CD8-positive, alpha-beta T cell (primary cell): ENCODE measurements at regions of chr16 and their contacts with region 1.

Region 1: GRCh38 chr16:46908540-46909372 is 24.6 kb downstream of the GPT2 start:
- DNase-seq: peak; percentile 29 to 74 (median 64)
- ATAC-seq: peak; percentile 26
- H3K4me3 ChIP-seq: no peak overlapping the region
- H3K4me3 Mint-ChIP-seq: no peak overlapping the region
- H3K27ac ChIP-seq: no peak overlapping the region
- H3K27ac Mint-ChIP-seq: no peak overlapping the region
- H3K4me1 ChIP-seq: no peaks in the 10 kb centered on the region
- H3K4me1 Mint-ChIP-seq: no peaks in the 10 kb centered on the region
- H3K27me3 ChIP-seq: no peaks in the 10 kb centered on the region
- H3K27me3 Mint-ChIP-seq: no peaks in the 10 kb centered on the region
- CTCF ChIP-seq: peak; percentile 82

Region 2: GRCh38 chr16:46555951-46556350 is 352.8 kb before region 1 on chr16:
- CTCF ChIA-PET with region 1: no interaction called
- POLR2A ChIA-PET with region 1: no interaction called
- intact Hi-C with region 1: loop called in 1 of 2 experiments (anchors 2 kb)
- DNase-seq: no peak
- ATAC-seq: no peak
- H3K4me3 ChIP-seq: no peak overlapping the region
- H3K4me3 Mint-ChIP-seq: no peak overlapping the region
- H3K27ac ChIP-seq: no peak overlapping the region
- H3K27ac Mint-ChIP-seq: no peak overlapping the region
- H3K4me1 ChIP-seq: no peaks in the 10 kb centered on the region
- H3K4me1 Mint-ChIP-seq: peaks cover 6% of the 10 kb centered on the region
- H3K27me3 ChIP-seq: no peaks in the 10 kb centered on the region
- H3K27me3 Mint-ChIP-seq: peaks cover 17% of the 10 kb centered on the region
- CTCF ChIP-seq: no peak

Region 3: DNA sequence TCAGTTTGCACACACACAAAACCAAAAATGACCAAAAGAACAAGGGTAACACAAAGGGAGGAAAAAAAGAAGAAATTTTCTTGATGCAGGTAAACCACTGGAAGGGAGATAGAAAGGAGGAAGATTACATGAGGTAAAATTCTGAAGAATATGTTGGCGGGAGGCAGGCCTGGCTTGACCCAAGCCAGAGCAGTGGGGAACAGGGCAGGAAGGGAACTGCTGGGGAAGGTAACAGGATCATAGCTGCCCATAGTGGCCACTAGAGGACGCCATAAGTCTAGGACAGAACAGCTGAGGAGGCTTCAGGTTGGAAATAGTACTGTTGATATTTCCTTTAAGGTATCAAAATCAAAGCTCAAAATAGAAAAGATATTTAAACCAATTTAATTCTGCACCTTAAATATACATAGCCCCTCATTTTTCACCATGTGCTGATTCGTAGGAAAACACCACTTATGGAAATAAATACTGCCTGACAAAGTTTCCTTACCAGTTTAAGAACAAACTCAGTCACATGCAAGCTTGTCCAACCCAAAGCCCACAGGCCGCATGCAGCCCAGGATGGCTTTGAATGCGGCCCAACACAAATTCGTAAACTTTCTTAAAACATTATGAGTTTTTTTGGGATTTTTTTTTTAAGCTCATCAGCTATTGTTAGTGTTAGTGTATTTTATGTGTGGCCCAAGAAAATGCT is 235.3 kb before region 1 on chr16:
- CTCF ChIA-PET with region 1: interaction called, 55 read pairs
- POLR2A ChIA-PET with region 1: no interaction called
- intact Hi-C with region 1: loop called in 1 of 2 experiments (anchors 1 kb)
- DNase-seq: peak in 8 of 9 experiments; percentile 17 to 76 (median 48)
- ATAC-seq: peak; percentile 95
- H3K4me3 ChIP-seq: no peak overlapping the region
- H3K4me3 Mint-ChIP-seq: no peak overlapping the region
- H3K27ac ChIP-seq: no peak overlapping the region
- H3K27ac Mint-ChIP-seq: no peak overlapping the region
- H3K4me1 ChIP-seq: no peaks in the 10 kb centered on the region
- H3K4me1 Mint-ChIP-seq: peaks cover 2% of the 10 kb centered on the region
- H3K27me3 ChIP-seq: no peaks in the 10 kb centered on the region
- H3K27me3 Mint-ChIP-seq: no peaks in the 10 kb centered on the region
- CTCF ChIP-seq: peak; percentile 95

Region 4: DNA sequence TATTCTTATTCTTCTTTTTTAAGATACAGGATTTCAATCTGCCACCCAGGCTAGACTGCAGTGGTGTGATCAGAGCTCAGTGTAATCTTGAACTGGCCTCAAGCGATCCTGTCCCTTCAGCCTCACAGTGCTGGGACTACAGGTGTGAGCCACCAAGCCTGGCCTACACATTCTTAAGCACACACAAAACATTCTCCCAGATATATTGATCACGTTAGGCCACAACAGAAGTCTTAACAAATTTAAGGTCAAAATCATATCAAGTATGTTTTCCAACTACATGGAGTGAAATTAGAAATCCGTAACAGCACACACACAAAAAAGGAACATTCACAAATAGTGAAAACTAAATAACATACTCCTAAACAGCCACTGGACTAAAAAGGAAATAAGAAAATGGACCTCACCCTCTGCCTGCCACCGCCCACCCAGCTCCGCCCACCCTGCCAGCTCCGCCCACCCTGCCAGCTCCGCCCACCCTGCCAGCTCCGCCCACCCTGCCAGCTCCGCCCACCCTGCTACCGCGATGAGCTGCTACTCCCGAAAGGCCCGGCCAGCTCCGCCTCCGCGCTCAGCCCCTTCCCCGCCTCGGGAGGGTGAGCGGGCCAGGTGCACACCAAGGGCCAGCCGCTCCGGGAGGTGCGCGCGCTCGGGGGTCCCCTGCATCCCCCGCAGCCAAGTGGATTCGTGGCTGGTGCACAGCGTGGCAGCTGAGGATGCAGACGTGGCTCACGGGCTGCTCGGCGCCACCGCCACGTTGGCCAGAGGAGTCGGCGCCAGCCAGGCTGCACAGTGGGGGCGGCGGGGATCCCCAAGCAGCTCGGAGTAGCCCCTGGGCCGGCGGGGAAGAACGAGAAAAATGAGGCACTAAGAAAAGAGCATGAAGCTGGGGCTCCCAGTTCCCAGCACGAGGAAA is 119.0 kb before region 1 on chr16:
- CTCF ChIA-PET with region 1: no interaction called
- POLR2A ChIA-PET with region 1: no interaction called
- intact Hi-C with region 1: no loop called
- DNase-seq: peak; percentile 66 to 86 (median 78)
- ATAC-seq: peak; percentile 98
- H3K4me3 ChIP-seq: peak overlapping the region; percentile 62 to 69
- H3K4me3 Mint-ChIP-seq: peak overlapping the region; percentile 74
- H3K27ac ChIP-seq: peak overlapping the region in 1 of 2 experiments; percentile 6
- H3K27ac Mint-ChIP-seq: peak overlapping the region; percentile 80
- H3K4me1 ChIP-seq: peaks cover 4% of the 10 kb centered on the region
- H3K4me1 Mint-ChIP-seq: peaks cover 18% of the 10 kb centered on the region
- H3K27me3 ChIP-seq: no peaks in the 10 kb centered on the region
- H3K27me3 Mint-ChIP-seq: no peaks in the 10 kb centered on the region
- CTCF ChIP-seq: no peak

Region 5: GRCh38 chr16:46853713-46854443 is 54.9 kb before region 1 on chr16:
- CTCF ChIA-PET with region 1: interaction called, 71 read pairs
- POLR2A ChIA-PET with region 1: no interaction called
- intact Hi-C with region 1: loop called in 1 of 2 experiments (anchors 1 kb)
- DNase-seq: peak; percentile 19 to 71 (median 57)
- ATAC-seq: no peak
- H3K4me3 ChIP-seq: no peak overlapping the region
- H3K4me3 Mint-ChIP-seq: no peak overlapping the region
- H3K27ac ChIP-seq: no peak overlapping the region
- H3K27ac Mint-ChIP-seq: no peak overlapping the region
- H3K4me1 ChIP-seq: no peaks in the 10 kb centered on the region
- H3K4me1 Mint-ChIP-seq: no peaks in the 10 kb centered on the region
- H3K27me3 ChIP-seq: no peaks in the 10 kb centered on the region
- H3K27me3 Mint-ChIP-seq: no peaks in the 10 kb centered on the region
- CTCF ChIP-seq: peak; percentile 50

Region 6: DNA sequence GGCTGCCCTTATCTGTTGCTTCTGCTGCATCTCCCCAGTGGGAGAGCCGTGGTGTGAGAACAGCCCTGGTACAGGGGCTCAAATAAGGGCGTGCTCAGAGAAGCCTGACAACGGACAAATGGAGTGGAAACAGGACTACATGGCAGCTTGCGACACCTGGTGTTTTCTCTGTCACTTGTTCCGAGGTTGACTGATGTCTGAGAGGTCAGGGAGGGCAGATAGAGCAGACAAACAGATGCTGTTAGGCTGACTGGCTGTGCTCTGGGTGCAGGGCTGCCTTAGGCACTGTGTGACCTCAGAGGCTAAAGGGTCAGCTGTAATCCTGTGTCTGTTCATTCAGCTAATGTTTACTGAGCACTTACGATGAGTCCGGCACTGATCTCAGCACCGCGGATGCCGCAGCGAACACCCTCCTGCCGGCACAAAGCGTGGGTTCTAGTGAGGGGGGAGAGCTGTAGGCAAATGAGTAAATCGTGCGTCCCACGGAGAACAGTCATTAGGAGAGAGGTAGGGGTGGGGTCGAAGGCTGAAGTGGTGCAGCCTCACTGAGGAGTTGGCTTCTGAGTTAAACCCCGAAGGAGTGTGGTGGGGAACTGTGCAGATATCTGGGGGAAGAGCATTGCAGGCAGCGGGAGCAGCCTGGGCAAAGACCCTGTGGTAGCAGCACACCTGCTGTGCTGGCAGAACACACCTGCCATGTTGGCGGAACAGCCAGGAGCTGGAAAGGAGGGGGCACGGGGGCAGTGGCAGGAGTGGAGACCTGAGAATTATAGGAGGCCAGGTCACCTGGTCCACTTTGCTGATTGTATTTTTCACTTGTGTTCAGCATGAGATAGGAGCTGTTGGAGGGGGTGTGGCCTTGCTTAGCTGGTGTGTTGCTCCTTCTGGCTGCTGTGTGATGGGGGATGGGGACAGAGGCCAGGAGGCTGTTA is 10.4 kb after region 1 on chr16:
- CTCF ChIA-PET with region 1: interaction called, 10 read pairs
- POLR2A ChIA-PET with region 1: no interaction called
- intact Hi-C with region 1: no loop called
- DNase-seq: no peak
- ATAC-seq: no peak
- H3K4me3 ChIP-seq: no peak overlapping the region
- H3K4me3 Mint-ChIP-seq: no peak overlapping the region
- H3K27ac ChIP-seq: no peak overlapping the region
- H3K27ac Mint-ChIP-seq: no peak overlapping the region
- H3K4me1 ChIP-seq: no peaks in the 10 kb centered on the region
- H3K4me1 Mint-ChIP-seq: no peaks in the 10 kb centered on the region
- H3K27me3 ChIP-seq: peaks cover 0 to 4% of the 10 kb centered on the region in 2 experiments
- H3K27me3 Mint-ChIP-seq: no peaks in the 10 kb centered on the region
- CTCF ChIP-seq: no peak